ENCODE measurements at regions of chr14 and their contacts with region 1.

Region 1: DNA sequence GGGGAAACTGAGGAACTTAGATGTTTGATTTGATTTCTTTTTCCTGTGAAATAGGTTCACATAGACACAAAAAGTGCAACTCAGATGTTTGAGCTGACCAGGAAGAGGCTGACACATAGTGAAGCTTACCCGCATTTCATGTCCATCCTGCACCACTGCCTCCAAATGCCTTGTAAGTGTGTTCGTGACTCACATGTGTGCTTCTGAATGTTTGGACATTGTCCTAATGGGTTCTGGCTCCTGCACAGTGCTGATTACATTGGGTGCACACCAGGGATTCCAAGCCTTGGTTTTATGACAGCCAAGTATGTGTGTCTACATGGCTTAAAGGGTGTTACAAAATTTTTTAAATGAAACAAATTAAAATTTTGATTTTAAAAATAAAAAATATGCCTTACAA is 137.4 kb downstream of the DAAM1 start:
- DNase-seq: no peak
- ATAC-seq: peak; percentile 62

Region 2: GRCh38 chr14:58882577-58883018 is 443.3 kb before region 1 on chr14:
- intact Hi-C with region 1: no loop called
- DNase-seq: no peak
- ATAC-seq: peak; percentile 85

Region 3: DNA sequence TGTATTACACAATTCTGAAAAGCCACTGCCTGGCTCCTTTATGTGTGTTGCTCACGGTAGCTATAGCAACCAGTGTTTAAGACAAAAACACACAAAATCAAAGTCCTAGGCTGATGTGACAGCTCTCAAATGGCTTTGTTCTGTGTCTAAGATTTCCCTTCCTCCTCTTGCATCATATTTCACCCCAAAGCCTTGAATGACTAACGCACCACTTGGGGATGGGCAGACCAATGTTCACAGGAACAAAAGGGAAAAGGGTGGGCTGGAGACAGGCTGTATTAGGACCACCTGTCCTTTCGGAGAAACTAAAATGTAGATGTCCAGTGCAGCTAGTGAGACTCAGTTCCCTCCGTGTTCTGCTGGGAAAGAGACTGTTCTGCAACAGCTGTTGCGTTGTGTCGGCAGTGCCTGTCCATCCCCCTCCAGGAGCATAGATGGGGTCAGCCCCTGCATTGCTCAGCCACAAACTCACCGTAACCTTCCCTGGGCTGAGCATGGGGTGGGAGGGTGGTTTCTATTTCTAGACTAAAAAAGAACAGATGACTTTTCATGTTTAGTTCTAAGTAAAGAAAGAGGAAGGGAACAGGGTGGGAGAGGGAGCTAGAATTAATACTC is 164.2 kb before region 1 on chr14:
- intact Hi-C with region 1: no loop called
- DNase-seq: no peak
- ATAC-seq: peak; percentile 67

Region 4: DNA sequence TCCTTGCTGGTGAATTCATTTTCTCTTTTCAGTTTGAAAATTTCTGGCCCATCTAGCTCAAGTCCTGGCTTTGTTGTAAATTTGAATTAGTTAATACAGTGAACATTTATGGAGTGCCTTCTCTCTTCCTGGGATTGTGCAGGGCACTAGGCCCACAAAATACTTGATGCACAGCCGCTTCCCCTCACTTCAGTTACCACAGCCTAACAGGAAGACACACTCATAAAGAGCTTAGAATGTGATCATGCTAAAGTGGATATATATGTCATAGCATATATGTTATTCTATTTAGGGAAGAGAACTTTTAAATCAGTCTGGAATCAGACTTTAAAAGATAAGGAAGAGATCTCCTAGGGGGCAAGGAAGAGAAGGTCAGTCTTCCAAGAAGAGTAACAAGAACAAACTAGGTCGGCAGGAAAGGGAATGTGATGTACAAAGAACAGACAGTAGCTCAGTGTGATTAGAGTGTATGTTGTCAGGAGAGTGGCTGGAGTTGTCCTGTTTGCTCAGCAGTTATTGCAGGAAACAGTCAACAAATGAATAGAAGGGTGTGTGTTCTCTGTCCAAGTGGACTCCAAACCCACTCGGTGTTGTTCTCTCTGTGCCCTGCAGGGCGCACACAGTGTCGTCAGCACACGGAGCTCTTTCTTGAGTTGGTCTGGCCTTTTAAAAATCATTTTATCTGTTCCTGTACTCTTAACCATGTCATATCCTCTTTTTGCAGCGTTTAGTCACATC is 63.0 kb before region 1 on chr14:
- intact Hi-C with region 1: no loop called
- DNase-seq: no peak
- ATAC-seq: peak; percentile 35

Region 5: GRCh38 chr14:59438195-59438647 is 112.3 kb after region 1 on chr14:
- intact Hi-C with region 1: loop called (anchors 5 kb)
- DNase-seq: no peak
- ATAC-seq: no peak